ENCODE measurements at regions of chr7 and their contacts with region 1.

Region 1: GRCh38 chr7:113289140-113289740 is 170.9 kb upstream of the SMIM30 start:
- DNase-seq: peak; percentile 31
- H3K4me3 Mint-ChIP-seq: no peak overlapping the region
- H3K27ac Mint-ChIP-seq: no peak overlapping the region
- H3K4me1 Mint-ChIP-seq: no peaks in the 10 kb centered on the region
- H3K27me3 Mint-ChIP-seq: no peaks in the 10 kb centered on the region
- CTCF ChIP-seq: no peak

Region 2: GRCh38 chr7:113421696-113422330 is 132.6 kb after region 1 on chr7:
- CTCF ChIA-PET with region 1: interaction called, 6 read pairs
- intact Hi-C with region 1: loop called (anchors 10 kb)
- DNase-seq: peak; percentile 79
- H3K4me3 Mint-ChIP-seq: no peak overlapping the region
- H3K27ac Mint-ChIP-seq: no peak overlapping the region
- H3K4me1 Mint-ChIP-seq: peaks cover 7% of the 10 kb centered on the region
- H3K27me3 Mint-ChIP-seq: no peaks in the 10 kb centered on the region
- CTCF ChIP-seq: peak; percentile 78